ENCODE measurements at regions of chr10 and their contacts with region 1.

Region 1: GRCh38 chr10:13440185-13441061 is 88.4 kb downstream of the BEND7 start:
- DNase-seq: no peak
- H3K4me3 ChIP-seq: peak overlapping the region; percentile 36 to 58
- H3K27ac ChIP-seq: no peak overlapping the region
- H3K4me1 ChIP-seq: peaks cover 7 to 8% of the 10 kb centered on the region in 2 donors
- H3K27me3 ChIP-seq: no peaks in the 10 kb centered on the region
- CTCF ChIP-seq: peak; percentile 53 to 88 (median 87)

Region 2: GRCh38 chr10:13160934-13161856 is 279.2 kb before region 1 on chr10 and contains the start of gene MCM10:
- intact Hi-C with region 1: loop called (anchors 5 kb)
- DNase-seq: peak; percentile 92 to 99
- H3K4me3 ChIP-seq: peak within 1 kb of the TSS; percentile 29 to 68
- H3K27ac ChIP-seq: no peak within 1 kb of the TSS
- H3K4me1 ChIP-seq: peaks cover 4 to 10% of the 10 kb centered on the region in 2 donors
- H3K27me3 ChIP-seq: no peaks in the 10 kb centered on the region
- CTCF ChIP-seq: peak; percentile 73 to 90 (median 85)
- total RNA-seq, gene MCM10: 0.11 TPM

Region 3: DNA sequence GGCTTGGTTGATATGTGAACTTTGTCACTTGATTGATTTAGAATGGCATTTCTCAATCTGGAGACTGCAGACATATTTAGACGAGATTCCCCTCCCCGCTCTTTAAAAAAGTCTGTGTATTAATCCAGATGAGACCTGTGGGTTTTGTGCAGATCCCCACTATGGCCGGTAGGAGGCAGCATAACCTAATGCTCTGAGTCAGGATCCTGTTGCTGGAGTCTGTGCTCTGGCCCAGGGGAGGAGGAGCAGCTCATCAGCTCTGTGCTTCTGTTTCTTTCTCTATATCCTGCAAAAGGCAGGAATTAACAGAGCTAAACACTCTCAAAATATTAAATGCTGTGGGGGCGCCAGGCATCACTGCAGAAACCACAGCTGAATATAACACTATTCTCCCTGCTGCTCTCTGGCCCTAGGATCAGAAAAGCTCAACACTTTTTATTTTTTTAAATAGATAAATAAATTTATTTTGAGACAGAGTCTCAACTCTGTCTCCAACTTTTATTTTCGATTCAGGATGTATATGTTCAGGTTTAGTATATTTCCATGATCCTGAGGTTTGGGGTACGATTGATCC is 68.4 kb before region 1 on chr10:
- intact Hi-C with region 1: loop called (anchors 2 kb)
- DNase-seq: peak in 1 of 2 donors; percentile 76
- H3K4me3 ChIP-seq: no peak overlapping the region
- H3K27ac ChIP-seq: no peak overlapping the region
- H3K4me1 ChIP-seq: no peaks in the 10 kb centered on the region
- H3K27me3 ChIP-seq: no peaks in the 10 kb centered on the region
- CTCF ChIP-seq: peak; percentile 48 to 83 (median 72)

Region 4: DNA sequence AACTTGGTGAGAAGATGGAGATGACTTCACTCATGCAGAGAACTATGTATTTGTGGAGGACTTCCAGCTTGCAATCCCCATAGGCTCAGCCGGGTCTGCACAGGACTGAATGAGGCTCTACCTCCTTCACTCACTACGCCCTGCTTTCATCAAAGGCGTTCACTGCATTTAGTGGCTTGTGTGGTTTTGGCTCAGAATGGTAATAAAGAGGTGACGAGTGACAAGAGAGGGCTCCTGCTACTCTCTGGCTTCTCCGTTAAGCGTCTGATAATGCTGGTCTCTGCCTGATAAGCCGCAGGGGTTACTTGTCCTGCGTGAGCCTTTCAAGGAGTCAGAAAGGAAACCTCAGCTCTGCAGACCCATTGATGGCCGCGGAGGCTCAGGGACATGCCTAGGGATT is 489.7 kb after region 1 on chr10:
- intact Hi-C with region 1: no loop called
- DNase-seq: no peak
- H3K4me3 ChIP-seq: no peak overlapping the region
- H3K27ac ChIP-seq: no peak overlapping the region
- H3K4me1 ChIP-seq: peaks cover 0 to 3% of the 10 kb centered on the region in 2 donors
- H3K27me3 ChIP-seq: no peaks in the 10 kb centered on the region
- CTCF ChIP-seq: no peak